ENCODE measurements at regions of chr3 and their contacts with region 1.

Region 1: DNA sequence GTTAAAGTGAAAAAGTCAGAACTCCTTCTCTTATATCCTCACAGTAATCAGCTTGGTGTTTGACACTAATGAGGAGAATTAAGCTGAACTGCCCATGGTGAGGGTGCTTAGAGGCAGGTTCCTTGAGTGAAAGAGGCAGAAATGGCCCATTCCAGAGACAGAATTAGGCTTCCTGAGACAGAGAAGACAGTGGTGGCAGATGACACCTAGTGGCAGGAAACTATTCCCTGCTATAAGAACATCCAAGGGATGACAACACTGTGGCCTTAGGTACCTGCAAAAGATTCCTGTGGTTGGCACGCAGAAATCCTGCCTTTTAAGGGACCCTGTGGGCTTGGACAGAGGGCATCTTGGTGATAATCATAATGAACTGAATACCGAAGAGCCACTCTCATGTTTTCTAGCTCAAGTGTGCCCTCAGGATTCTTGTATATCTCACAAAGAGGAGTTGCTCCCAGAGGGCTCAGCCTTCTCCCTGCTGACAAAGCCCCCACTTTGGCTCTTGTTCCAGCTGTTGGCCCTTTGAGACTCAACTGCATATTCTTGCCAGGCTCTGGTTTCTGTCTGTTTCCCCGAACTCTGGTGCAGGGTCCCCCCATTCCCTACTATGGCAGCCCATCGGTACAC is 56.0 kb downstream of the KBTBD12 start:
- DNase-seq: peak; percentile 31
- H3K4me3 Mint-ChIP-seq: no peak overlapping the region
- H3K27ac Mint-ChIP-seq: no peak overlapping the region
- H3K4me1 Mint-ChIP-seq: no peaks in the 10 kb centered on the region
- H3K27me3 Mint-ChIP-seq: peaks cover 14% of the 10 kb centered on the region

Region 2: DNA sequence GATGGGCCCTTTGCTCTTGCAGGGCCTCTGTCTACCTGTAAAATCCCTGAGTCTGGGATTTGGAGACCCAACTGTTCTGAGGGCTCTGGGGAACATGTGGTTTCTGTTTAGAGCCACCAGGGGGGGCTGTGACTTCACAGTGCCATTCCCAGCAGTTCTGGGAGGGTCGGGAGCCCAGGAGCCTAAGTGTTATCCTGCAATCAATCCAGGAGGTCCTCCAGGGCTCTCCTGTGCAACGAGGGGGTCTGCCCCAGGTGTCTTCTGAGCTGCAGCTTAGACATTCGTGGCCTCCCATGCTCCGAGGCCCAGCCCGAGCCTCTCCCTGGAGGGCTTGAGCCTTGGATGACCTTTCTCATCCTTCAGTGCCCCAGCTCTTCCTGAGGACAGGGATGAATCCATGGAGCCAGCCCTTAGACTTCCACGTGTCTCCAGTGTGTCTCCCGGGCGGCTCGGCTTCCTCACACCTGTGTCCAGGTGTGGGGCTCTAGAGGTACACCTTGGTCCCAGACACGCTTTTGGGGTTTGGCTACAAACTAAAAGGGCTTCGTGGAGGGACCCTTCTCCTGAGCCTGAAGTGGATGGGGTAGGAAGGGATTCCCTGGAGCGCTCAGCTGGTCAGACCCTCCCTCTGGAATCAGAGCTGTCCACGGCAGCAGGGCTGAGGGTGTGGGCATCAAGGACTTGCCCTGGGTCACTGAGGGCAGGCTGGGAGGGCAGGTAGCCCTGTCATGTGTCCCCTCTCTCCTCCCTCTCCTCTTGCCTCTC is 318.7 kb before region 1 on chr3:
- CTCF ChIA-PET with region 1: interaction called, 3 read pairs
- intact Hi-C with region 1: loop called (anchors 1 kb)
- DNase-seq: no peak
- H3K4me3 Mint-ChIP-seq: no peak overlapping the region
- H3K27ac Mint-ChIP-seq: no peak overlapping the region
- H3K4me1 Mint-ChIP-seq: no peaks in the 10 kb centered on the region
- H3K27me3 Mint-ChIP-seq: no peaks in the 10 kb centered on the region

Region 3: GRCh38 chr3:127791211-127791946 is 179.7 kb before region 1 on chr3:
- CTCF ChIA-PET with region 1: no interaction called
- intact Hi-C with region 1: loop called (anchors 5 kb)
- DNase-seq: peak; percentile 48
- H3K4me3 Mint-ChIP-seq: no peak overlapping the region
- H3K27ac Mint-ChIP-seq: no peak overlapping the region
- H3K4me1 Mint-ChIP-seq: no peaks in the 10 kb centered on the region
- H3K27me3 Mint-ChIP-seq: peaks cover 16% of the 10 kb centered on the region